ENCODE measurements at regions of chr20 and their contacts with region 1.

Region 1: DNA sequence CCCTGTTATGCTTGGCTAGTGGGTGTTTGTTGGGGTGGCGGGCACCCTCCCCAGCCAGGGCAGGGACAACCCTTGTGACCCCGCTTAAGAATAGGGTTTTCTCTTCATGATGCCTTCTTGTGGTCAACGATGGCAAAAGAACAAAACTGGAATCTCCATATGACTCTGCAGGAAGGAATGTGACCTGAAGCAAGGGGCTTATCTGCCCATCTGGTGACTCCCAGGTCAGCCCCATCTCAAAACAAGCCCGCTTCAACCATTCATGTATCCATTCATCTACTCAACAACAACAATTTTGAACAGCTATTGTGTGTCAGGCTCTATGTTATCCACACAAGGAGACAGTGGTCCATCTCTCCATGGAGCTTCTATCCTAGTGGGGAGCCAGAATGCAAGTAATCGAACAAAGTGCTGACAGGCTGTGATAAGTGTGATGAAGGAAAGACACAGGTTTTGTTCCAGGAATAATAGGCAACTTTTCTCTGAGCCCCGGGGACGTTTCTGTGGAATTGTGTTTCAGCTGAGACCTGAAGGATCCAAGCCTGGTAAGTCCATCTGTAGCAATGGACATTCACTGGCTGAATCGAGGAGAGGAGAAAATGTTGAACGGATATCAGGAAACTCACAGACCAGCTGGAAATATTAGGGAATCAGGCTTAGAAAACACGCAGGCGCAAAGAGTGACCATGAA is 30.7 kb upstream of the TGM6 start:
- DNase-seq: no peak
- H3K4me3 ChIP-seq: no peak overlapping the region
- H3K27ac ChIP-seq: no peak overlapping the region
- H3K4me1 ChIP-seq: no peaks in the 10 kb centered on the region
- H3K27me3 ChIP-seq: no peaks in the 10 kb centered on the region
- CTCF ChIP-seq: no peak
- POLR2A ChIP-seq: no peak

Region 2: GRCh38 chr20:2416541-2417212 is 66.7 kb after region 1 on chr20:
- intact Hi-C with region 1: loop called (anchors 2 kb)
- DNase-seq: no peak
- H3K4me3 ChIP-seq: no peak overlapping the region
- H3K27ac ChIP-seq: no peak overlapping the region
- H3K4me1 ChIP-seq: no peaks in the 10 kb centered on the region
- H3K27me3 ChIP-seq: no peaks in the 10 kb centered on the region
- CTCF ChIP-seq: no peak
- POLR2A ChIP-seq: no peak

Measured in breast epithelium (tissue), 4 donors.